Activated CD8-positive, alpha-beta T cell treated with anti-CD3 and anti-CD28 coated beads for 36 hours (primary cell): ENCODE measurements at regions of chr18 and their contacts with region 1.

Region 1: GRCh38 chr18:41809652-41810051 is 145.4 kb upstream of the PIK3C3 start:
- DNase-seq: no peak
- ATAC-seq: no peak
- H3K4me3 Mint-ChIP-seq: no peak overlapping the region
- H3K27ac Mint-ChIP-seq: no peak overlapping the region
- H3K4me1 Mint-ChIP-seq: no peaks in the 10 kb centered on the region
- H3K27me3 Mint-ChIP-seq: peaks cover 6% of the 10 kb centered on the region
- CTCF ChIP-seq: no peak

Region 2: GRCh38 chr18:41761333-41762028 is 48.2 kb before region 1 on chr18:
- CTCF ChIA-PET with region 1: no interaction called
- POLR2A ChIA-PET with region 1: no interaction called
- intact Hi-C with region 1: loop called (anchors 5 kb)
- DNase-seq: no peak
- ATAC-seq: no peak
- H3K4me3 Mint-ChIP-seq: no peak overlapping the region
- H3K27ac Mint-ChIP-seq: no peak overlapping the region
- H3K4me1 Mint-ChIP-seq: no peaks in the 10 kb centered on the region
- H3K27me3 Mint-ChIP-seq: peaks cover 3% of the 10 kb centered on the region
- CTCF ChIP-seq: no peak

Region 3: GRCh38 chr18:41789001-41789400 is 20.7 kb before region 1 on chr18:
- CTCF ChIA-PET with region 1: no interaction called
- POLR2A ChIA-PET with region 1: no interaction called
- intact Hi-C with region 1: no loop called
- DNase-seq: no peak
- ATAC-seq: no peak
- H3K4me3 Mint-ChIP-seq: no peak overlapping the region
- H3K27ac Mint-ChIP-seq: no peak overlapping the region
- H3K4me1 Mint-ChIP-seq: no peaks in the 10 kb centered on the region
- H3K27me3 Mint-ChIP-seq: peaks cover 3% of the 10 kb centered on the region
- CTCF ChIP-seq: no peak

Region 4: DNA sequence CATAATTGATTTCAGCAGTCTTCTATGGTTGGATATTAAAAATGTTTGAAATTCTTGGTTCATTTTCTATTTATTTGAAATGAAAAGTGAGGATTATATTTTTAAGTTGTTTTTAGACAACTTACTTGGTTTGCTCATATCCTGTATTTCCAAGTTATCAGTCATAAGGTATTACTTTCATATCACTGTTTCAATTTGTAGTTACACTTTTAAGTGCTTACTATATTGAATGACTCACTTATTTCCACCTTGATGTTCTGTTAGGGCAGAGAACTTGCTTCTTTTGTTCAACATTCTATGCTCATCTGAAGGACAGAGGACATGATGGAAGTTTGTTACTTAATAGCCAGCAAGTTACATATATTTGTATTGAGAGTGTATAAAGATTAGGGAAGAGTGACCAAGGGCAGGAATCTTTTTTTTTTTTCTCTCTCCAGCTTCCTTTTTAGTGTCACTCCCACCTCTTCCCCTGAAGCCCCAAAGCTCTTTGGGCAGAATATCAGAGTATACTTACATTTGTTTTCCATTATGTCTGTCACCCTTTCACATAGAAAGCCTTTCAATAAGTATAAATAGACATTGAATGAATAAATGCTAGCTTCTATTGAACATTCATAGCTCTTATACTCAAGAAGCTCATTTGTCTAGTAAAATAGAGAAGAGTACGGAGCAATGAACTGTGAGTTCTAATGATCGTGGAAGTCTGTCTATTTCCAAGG is 173.4 kb after region 1 on chr18:
- CTCF ChIA-PET with region 1: no interaction called
- POLR2A ChIA-PET with region 1: no interaction called
- intact Hi-C with region 1: no loop called
- DNase-seq: no peak
- ATAC-seq: peak; percentile 95
- H3K4me3 Mint-ChIP-seq: peak overlapping the region; percentile 19
- H3K27ac Mint-ChIP-seq: peak overlapping the region; percentile 85
- H3K4me1 Mint-ChIP-seq: peaks cover 52% of the 10 kb centered on the region
- H3K27me3 Mint-ChIP-seq: no peaks in the 10 kb centered on the region
- CTCF ChIP-seq: no peak